ENCODE measurements at regions of chr20 and their contacts with region 1.

Region 1: GRCh38 chr20:3173610-3174441 is 477 bp upstream of the LZTS3 start:
- DNase-seq: peak; percentile 45 to 95 (median 90)
- ATAC-seq: peak; percentile 10
- H3K4me3 ChIP-seq: peak overlapping the region; percentile 81 to 96
- H3K4me3 Mint-ChIP-seq: peak overlapping the region; percentile 82
- H3K27ac ChIP-seq: peak overlapping the region in 1 of 2 experiments; percentile 97
- H3K27ac Mint-ChIP-seq: peak overlapping the region; percentile 62
- H3K4me1 ChIP-seq: peaks cover 13% of the 10 kb centered on the region
- H3K4me1 Mint-ChIP-seq: peaks cover 17% of the 10 kb centered on the region
- H3K27me3 ChIP-seq: peaks cover 0 to 7% of the 10 kb centered on the region in 2 experiments
- H3K27me3 Mint-ChIP-seq: peaks cover 10% of the 10 kb centered on the region
- CTCF ChIP-seq: no peak

Region 2: GRCh38 chr20:3045816-3046676 is 127.8 kb before region 1 on chr20 and contains the start of gene MRPS26:
- CTCF ChIA-PET with region 1: no interaction called
- POLR2A ChIA-PET with region 1: no interaction called
- intact Hi-C with region 1: loop called in 1 of 2 experiments (anchors 1 kb)
- DNase-seq: peak; percentile 48 to 87 (median 76)
- ATAC-seq: peak; percentile 85
- H3K4me3 ChIP-seq: peak within 1 kb of the TSS; percentile 72 to 95
- H3K4me3 Mint-ChIP-seq: peak within 1 kb of the TSS; percentile 82
- H3K27ac ChIP-seq: peak within 1 kb of the TSS; percentile 66 to 71
- H3K27ac Mint-ChIP-seq: peak within 1 kb of the TSS; percentile 76
- H3K4me1 ChIP-seq: peaks cover 15% of the 10 kb centered on the region
- H3K4me1 Mint-ChIP-seq: peaks cover 19% of the 10 kb centered on the region
- H3K27me3 ChIP-seq: no peaks in the 10 kb centered on the region
- H3K27me3 Mint-ChIP-seq: no peaks in the 10 kb centered on the region
- CTCF ChIP-seq: no peak
- total RNA-seq, gene MRPS26: 16.5 to 19.5 TPM

Region 3: DNA sequence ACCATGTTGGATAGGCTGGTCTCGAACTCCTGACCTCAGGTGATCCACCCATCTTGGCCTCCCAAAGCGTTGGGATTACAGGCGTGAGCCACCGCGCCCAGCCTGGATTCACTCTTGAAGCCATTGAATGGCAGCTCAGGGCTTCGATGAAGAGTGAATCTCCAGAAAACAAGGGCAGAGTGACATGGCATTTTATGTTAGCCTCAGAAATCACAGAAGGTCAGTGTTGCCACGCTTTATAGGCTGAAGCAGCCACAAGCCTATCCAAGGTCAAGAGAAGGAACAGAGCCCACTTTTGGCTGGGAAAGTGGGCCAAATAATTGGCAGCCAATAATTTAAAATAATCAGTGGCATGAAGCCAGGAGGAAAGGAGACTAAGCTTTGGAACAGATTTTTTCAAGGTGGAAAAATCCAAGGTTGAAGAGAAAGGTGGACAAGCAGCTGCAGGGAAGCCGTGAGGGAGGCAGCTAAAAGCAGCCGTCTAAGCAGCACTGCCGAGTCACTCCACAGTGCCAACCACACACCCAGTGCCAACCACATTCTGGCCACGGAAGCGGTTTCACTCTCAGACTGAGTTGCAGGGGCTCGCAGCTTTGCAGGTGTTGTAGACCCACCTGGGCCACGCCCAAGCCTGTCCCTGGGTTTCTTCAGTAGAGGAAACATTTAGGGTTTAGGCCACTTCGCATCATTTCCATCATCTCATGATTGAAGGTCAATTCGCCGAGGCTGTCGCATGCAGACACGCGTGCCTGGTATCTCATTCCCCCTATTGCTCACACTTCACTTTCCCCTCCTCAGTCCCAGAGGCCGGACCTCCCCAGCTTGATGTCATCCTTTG is 71.9 kb before region 1 on chr20:
- CTCF ChIA-PET with region 1: no interaction called
- POLR2A ChIA-PET with region 1: no interaction called
- intact Hi-C with region 1: no loop called
- DNase-seq: peak in 7 of 9 experiments; percentile 49 to 78 (median 68)
- ATAC-seq: peak; percentile 85
- H3K4me3 ChIP-seq: peak overlapping the region in 1 of 2 experiments; percentile 6
- H3K4me3 Mint-ChIP-seq: peak overlapping the region; percentile 42
- H3K27ac ChIP-seq: no peak overlapping the region
- H3K27ac Mint-ChIP-seq: peak overlapping the region; percentile 69
- H3K4me1 ChIP-seq: peaks cover 21% of the 10 kb centered on the region
- H3K4me1 Mint-ChIP-seq: peaks cover 25% of the 10 kb centered on the region
- H3K27me3 ChIP-seq: peaks cover 0 to 8% of the 10 kb centered on the region in 2 experiments
- H3K27me3 Mint-ChIP-seq: no peaks in the 10 kb centered on the region
- CTCF ChIP-seq: no peak

Region 4: DNA sequence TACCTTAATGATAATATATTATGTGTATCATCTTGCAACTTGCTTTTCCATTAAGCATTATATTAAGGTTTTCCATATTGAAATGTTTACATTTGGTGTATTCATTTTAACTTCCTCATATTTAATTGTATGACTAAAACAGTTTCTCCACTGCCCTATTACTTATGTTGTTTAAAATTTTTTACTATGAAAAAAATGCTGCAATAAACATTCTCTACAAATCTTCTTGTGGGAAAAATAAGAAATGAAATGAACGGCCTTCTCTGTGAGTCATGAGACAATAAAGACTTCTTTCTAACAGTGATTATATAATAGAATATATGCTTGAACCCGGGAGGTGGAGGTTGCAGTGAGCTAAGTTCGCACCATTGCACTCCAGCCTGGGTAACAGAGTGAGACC is 39.7 kb before region 1 on chr20:
- CTCF ChIA-PET with region 1: no interaction called
- POLR2A ChIA-PET with region 1: no interaction called
- intact Hi-C with region 1: no loop called
- DNase-seq: no peak
- ATAC-seq: no peak
- H3K4me3 ChIP-seq: no peak overlapping the region
- H3K4me3 Mint-ChIP-seq: no peak overlapping the region
- H3K27ac ChIP-seq: no peak overlapping the region
- H3K27ac Mint-ChIP-seq: no peak overlapping the region
- H3K4me1 ChIP-seq: no peaks in the 10 kb centered on the region
- H3K4me1 Mint-ChIP-seq: peaks cover 15% of the 10 kb centered on the region
- H3K27me3 ChIP-seq: no peaks in the 10 kb centered on the region
- H3K27me3 Mint-ChIP-seq: no peaks in the 10 kb centered on the region
- CTCF ChIP-seq: no peak

Region 5: DNA sequence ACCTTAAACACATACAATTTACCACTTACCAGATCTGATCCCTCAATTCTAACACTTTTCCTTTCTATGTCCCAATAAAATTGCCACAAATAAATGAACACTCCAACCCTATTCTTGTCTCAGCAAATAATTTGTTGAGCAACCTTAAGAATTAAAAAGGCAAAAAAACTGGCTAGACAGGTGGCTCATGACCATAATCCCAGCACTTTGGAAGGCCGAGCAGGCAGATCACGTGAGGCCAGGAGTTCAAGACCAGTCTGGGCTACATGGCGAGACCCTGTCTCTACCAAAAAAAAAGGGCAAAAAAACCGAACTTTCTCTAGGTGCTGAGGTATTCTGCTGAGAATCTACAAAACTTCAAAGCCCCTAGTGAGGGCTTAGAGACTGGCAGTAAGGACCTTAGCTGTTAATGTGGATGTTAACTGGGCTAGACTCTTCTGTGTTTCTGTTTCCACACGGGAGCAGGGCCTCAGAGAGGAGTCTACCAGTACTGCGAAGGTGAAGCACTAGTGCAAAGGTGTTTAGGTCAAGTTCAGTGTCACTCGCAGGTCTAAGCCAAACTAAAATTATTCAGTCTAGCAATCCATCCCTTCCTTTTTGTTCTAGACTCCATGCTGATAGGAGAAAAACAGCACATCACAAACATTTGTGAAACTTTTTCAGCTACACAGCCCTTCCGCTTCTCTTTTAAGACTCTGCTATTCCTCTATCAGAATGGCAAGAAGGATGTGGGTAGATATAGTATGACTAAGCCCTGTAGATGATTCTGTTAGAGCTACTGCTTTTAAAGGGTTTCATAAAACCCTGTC is 16.8 kb before region 1 on chr20:
- CTCF ChIA-PET with region 1: interaction called, 4 read pairs
- POLR2A ChIA-PET with region 1: interaction called, 9 read pairs
- intact Hi-C with region 1: loop called (anchors 1 kb)
- DNase-seq: peak in 1 of 9 experiments; percentile 60
- ATAC-seq: peak; percentile 80
- H3K4me3 ChIP-seq: peak overlapping the region in 1 of 2 experiments; percentile 12
- H3K4me3 Mint-ChIP-seq: peak overlapping the region; percentile 60
- H3K27ac ChIP-seq: peak overlapping the region in 1 of 2 experiments; percentile 58
- H3K27ac Mint-ChIP-seq: peak overlapping the region; percentile 90
- H3K4me1 ChIP-seq: peaks cover 43% of the 10 kb centered on the region
- H3K4me1 Mint-ChIP-seq: peaks cover 60% of the 10 kb centered on the region
- H3K27me3 ChIP-seq: no peaks in the 10 kb centered on the region
- H3K27me3 Mint-ChIP-seq: no peaks in the 10 kb centered on the region
- CTCF ChIP-seq: no peak